ENCODE measurements at regions of chr16 and their contacts with region 1.

Region 1: GRCh38 chr16:87062569-87063442 is 254.4 kb downstream of the C16orf95 start:
- H3K4me3 ChIP-seq: no peak overlapping the region
- H3K27ac ChIP-seq: no peak overlapping the region
- H3K4me1 ChIP-seq: no peaks in the 10 kb centered on the region
- CTCF ChIP-seq: peak; percentile 78

Region 2: GRCh38 chr16:86563489-86564345 is 499.1 kb before region 1 on chr16:
- CTCF ChIA-PET with region 1: interaction called, 127 read pairs
- POLR2A ChIA-PET with region 1: interaction called, 3 read pairs
- H3K4me3 ChIP-seq: 0 out of 2 replicates have a peak overlapping the region, but pooled peaks have one; percentile 1
- H3K27ac ChIP-seq: no peak overlapping the region
- H3K4me1 ChIP-seq: no peaks in the 10 kb centered on the region
- CTCF ChIP-seq: peak; percentile 98

Region 3: DNA sequence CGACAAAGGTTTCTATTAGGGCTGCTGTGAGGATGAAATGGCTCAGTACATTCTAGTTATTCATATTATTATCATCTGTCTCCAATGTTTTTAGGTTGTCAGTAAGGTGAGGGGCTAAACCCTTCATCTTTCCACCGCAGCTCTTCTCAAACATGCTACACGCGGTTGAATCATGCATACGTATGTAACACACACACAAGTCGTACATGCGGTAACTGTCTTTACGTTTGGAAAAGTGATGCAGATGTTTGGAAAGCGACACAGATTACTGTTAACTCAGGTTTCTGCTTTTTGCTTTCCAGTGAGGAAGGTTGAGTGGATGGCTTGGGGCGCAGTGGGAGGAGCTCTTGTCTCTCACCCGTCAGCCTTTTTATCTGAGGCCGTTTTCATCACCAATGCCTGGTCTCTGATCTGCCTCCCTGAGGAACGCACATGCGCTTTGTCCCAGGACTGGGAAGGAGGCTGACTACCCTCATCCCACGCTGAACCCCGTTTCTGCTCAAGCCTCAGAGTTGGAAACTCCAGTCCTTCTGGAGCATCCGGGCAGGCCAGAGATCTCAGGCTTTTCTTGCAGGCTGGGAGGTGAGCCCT is 487.6 kb before region 1 on chr16:
- CTCF ChIA-PET with region 1: interaction called, 10 read pairs
- POLR2A ChIA-PET with region 1: no interaction called
- H3K4me3 ChIP-seq: no peak overlapping the region
- H3K27ac ChIP-seq: no peak overlapping the region
- H3K4me1 ChIP-seq: peaks cover 3% of the 10 kb centered on the region; the same call in 1 of the 2 replicates
- CTCF ChIP-seq: no peak

Region 4: GRCh38 chr16:87017365-87018012 is 45.3 kb before region 1 on chr16:
- CTCF ChIA-PET with region 1: interaction called, 16 read pairs
- POLR2A ChIA-PET with region 1: no interaction called
- H3K4me3 ChIP-seq: no peak overlapping the region
- H3K27ac ChIP-seq: no peak overlapping the region
- H3K4me1 ChIP-seq: no peaks in the 10 kb centered on the region
- CTCF ChIP-seq: no peak

Region 5: DNA sequence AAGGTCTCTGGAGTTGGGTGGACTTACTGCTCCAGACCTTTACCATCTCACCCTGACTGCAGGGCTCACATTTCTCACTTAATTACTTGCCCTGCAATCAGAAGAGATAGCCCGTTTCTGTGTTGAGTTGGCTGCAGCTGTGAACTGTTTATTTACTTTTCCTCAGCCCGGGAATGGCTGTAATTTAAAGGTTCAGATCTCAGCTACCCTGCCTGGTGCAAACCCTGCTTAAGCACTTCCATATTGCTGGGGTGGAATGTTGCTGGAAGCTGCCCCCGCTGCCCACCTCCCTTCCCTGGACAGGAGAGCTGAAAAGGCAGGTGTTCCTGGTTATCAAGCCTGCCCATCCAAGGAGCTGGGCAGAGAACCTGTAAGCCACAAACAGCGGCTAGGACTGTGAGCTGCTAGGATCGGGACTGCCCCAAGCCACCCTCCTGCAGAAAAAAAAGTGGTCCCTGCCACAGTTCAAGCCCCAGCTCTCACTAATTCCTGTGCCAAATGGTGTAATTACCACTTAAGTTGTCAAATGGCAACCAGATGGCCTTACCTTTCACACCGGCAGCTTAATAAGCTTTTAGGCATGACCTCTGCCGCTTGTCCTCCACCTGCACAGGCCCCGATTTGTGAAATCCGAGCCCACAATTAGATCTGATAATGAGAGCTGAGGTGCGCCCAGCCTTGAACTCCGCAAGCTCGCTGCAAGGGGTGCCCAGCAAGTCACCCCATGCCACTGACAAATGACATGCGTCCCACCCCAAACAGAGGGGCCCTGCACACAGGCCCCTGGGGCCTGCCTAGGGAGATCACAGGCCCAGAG is 15.4 kb before region 1 on chr16:
- CTCF ChIA-PET with region 1: interaction called, 21 read pairs
- POLR2A ChIA-PET with region 1: no interaction called
- H3K4me3 ChIP-seq: no peak overlapping the region
- H3K27ac ChIP-seq: no peak overlapping the region; the same call in 1 of the 2 replicates
- H3K4me1 ChIP-seq: peaks cover 9% of the 10 kb centered on the region
- CTCF ChIP-seq: no peak

Region 6: GRCh38 chr16:87076950-87077749 is 14.3 kb after region 1 on chr16:
- CTCF ChIA-PET with region 1: interaction called, 46 read pairs
- POLR2A ChIA-PET with region 1: no interaction called
- H3K4me3 ChIP-seq: no peak overlapping the region
- H3K27ac ChIP-seq: no peak overlapping the region
- H3K4me1 ChIP-seq: no peaks in the 10 kb centered on the region
- CTCF ChIP-seq: peak; percentile 69

Region 7: GRCh38 chr16:87145181-87146176 is 82.7 kb after region 1 on chr16:
- CTCF ChIA-PET with region 1: no interaction called
- POLR2A ChIA-PET with region 1: no interaction called
- H3K4me3 ChIP-seq: no peak overlapping the region
- H3K27ac ChIP-seq: no peak overlapping the region
- H3K4me1 ChIP-seq: no peaks in the 10 kb centered on the region
- CTCF ChIP-seq: no peak

Region 8: GRCh38 chr16:87278191-87279095 is 215.6 kb after region 1 on chr16:
- CTCF ChIA-PET with region 1: interaction called, 14 read pairs
- POLR2A ChIA-PET with region 1: no interaction called
- H3K4me3 ChIP-seq: no peak overlapping the region
- H3K27ac ChIP-seq: no peak overlapping the region
- H3K4me1 ChIP-seq: no peaks in the 10 kb centered on the region; the same call in 1 of the 2 replicates
- CTCF ChIP-seq: peak; percentile 88

Measured in HEK293 (cell line).